Heart right ventricle (tissue), 16 donors: ENCODE measurements at regions of chr7 and their contacts with region 1.

Region 1: GRCh38 chr7:2800931-2801688 is 43.0 kb downstream of the GNA12 start:
- DNase-seq: peak; percentile 55 to 73
- ATAC-seq: peak in 2 of 8 donors; percentile 13 to 19
- H3K4me3 ChIP-seq: no peak overlapping the region
- H3K27ac ChIP-seq: peak overlapping the region in 8 of 10 donors; percentile 47 to 84 (median 77)
- H3K4me1 ChIP-seq: peaks cover 18 to 85% (median 57%) of the 10 kb centered on the region in 9 donors
- H3K27me3 ChIP-seq: no peaks in the 10 kb centered on the region
- CTCF ChIP-seq: no peak

Region 2: DNA sequence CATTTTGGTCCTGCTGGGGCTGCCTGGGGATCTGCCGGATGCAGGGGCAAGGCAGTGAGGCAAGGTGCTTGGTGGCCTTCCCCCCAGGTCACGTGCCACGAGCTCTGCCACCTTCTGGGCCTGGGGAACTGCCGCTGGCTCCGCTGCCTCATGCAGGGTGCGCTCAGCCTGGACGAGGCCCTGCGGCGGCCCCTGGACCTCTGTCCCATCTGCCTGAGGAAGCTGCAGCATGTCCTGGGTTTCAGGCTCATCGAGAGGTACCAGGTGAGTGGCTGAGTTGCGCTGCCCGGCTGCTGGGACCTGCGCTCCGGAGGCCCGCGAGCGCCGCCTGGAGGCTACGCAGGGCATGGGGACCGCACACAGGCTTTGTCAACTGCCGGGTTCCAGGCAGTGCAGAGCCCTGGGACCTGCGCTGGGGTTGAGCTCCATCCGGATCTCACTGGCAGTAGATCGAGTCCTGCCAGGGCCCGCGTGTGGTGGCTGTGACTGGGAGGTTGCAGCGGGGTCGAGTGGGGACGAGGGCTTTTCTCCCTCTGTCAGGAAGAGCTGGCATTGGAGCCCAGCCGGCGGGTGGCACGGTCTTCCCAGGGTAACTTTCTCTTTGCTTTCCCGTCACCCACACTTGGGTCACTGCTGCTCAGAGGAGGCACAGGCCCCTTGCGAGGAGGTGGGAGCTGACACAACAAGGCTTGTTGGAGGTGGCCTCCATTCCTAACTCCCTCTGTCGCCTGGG is 91.4 kb before region 1 on chr7:
- intact Hi-C with region 1: no loop called
- DNase-seq: peak; percentile 41 to 66
- ATAC-seq: peak; percentile 43 to 65 (median 58)
- H3K4me3 ChIP-seq: peak overlapping the region in 3 of 10 donors; percentile 3 to 24 (median 19)
- H3K27ac ChIP-seq: no peak overlapping the region
- H3K4me1 ChIP-seq: peaks cover 0 to 34% (median 23%) of the 10 kb centered on the region in 9 donors
- H3K27me3 ChIP-seq: no peaks in the 10 kb centered on the region
- CTCF ChIP-seq: peak; percentile 62 to 92 (median 82)

Region 3: GRCh38 chr7:2720582-2721491 is 80.3 kb before region 1 on chr7:
- intact Hi-C with region 1: loop called in 1 of 10 experiments (anchors 10 kb)
- DNase-seq: no peak
- ATAC-seq: peak in 1 of 8 donors; percentile 3
- H3K4me3 ChIP-seq: no peak overlapping the region
- H3K27ac ChIP-seq: no peak overlapping the region
- H3K4me1 ChIP-seq: peaks cover 7 to 29% (median 22%) of the 10 kb centered on the region in 9 donors
- H3K27me3 ChIP-seq: no peaks in the 10 kb centered on the region
- CTCF ChIP-seq: peak in 2 of 9 donors; percentile 9 to 15

Region 4: GRCh38 chr7:2821161-2821841 is 20.2 kb after region 1 on chr7:
- intact Hi-C with region 1: loop called in 1 of 10 experiments (anchors 1 kb)
- DNase-seq: no peak
- ATAC-seq: peak in 1 of 8 donors; percentile 16
- H3K4me3 ChIP-seq: no peak overlapping the region
- H3K27ac ChIP-seq: peak overlapping the region in 8 of 10 donors; percentile 11 to 73 (median 56)
- H3K4me1 ChIP-seq: peaks cover 19 to 88% (median 75%) of the 10 kb centered on the region in 9 donors
- H3K27me3 ChIP-seq: no peaks in the 10 kb centered on the region
- CTCF ChIP-seq: peak in 1 of 9 donors; percentile 11

Region 5: DNA sequence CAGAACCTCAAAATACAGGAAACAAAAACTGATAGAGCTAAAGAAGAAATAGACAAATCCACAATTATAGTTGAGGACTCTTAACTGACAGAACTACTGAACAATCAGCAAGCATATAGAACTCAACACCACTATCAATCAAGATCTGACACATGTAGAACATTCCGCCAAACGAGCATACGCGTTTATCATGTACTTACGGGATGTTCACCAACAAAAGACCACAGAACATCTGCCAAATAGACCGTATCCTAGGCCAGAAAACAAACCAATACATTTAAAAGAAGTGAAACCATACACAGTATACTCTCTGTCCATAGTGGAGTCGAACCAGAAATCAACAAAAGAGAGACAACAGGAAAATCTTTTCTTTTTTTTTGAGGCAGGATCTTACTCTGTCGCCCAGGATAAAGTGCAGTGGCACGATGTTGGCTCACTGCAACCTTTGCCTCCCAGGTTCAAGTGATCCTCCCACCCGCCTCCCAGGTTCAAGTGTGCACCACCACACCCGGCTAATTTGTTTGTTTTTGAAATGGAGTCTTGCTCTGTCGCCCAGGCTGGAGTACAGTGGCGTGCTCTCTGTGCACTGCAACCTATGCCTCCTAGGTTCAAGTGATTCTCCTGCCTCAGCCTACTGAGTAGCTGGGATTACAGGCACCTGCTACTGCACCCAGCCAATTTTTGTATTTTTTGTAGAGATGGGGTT is 37.9 kb after region 1 on chr7:
- intact Hi-C with region 1: loop called in 4 of 10 experiments (anchors 5 kb)
- DNase-seq: no peak
- ATAC-seq: no peak
- H3K4me3 ChIP-seq: no peak overlapping the region
- H3K27ac ChIP-seq: peak overlapping the region in 1 of 10 donors; percentile 19
- H3K4me1 ChIP-seq: peaks cover 4 to 67% (median 51%) of the 10 kb centered on the region in 9 donors
- H3K27me3 ChIP-seq: no peaks in the 10 kb centered on the region
- CTCF ChIP-seq: no peak

Region 6: GRCh38 chr7:2844165-2844898 is 43.2 kb after region 1 on chr7 and contains the start of gene GNA12:
- intact Hi-C with region 1: loop called in 4 of 10 experiments (anchors 5 kb)
- DNase-seq: peak; percentile 98
- ATAC-seq: peak; percentile 96 to 99 (median 98)
- H3K4me3 ChIP-seq: peak within 1 kb of the TSS; percentile 72 to 87 (median 78)
- H3K27ac ChIP-seq: peak within 1 kb of the TSS; percentile 32 to 77 (median 68)
- H3K4me1 ChIP-seq: peaks cover 4 to 49% (median 32%) of the 10 kb centered on the region in 9 donors
- H3K27me3 ChIP-seq: no peaks in the 10 kb centered on the region
- CTCF ChIP-seq: no peak
- total RNA-seq, gene GNA12: 25.0 to 46.4 (median 34.5) TPM